ENCODE measurements at regions of chr2 and their contacts with region 1.

Region 1: DNA sequence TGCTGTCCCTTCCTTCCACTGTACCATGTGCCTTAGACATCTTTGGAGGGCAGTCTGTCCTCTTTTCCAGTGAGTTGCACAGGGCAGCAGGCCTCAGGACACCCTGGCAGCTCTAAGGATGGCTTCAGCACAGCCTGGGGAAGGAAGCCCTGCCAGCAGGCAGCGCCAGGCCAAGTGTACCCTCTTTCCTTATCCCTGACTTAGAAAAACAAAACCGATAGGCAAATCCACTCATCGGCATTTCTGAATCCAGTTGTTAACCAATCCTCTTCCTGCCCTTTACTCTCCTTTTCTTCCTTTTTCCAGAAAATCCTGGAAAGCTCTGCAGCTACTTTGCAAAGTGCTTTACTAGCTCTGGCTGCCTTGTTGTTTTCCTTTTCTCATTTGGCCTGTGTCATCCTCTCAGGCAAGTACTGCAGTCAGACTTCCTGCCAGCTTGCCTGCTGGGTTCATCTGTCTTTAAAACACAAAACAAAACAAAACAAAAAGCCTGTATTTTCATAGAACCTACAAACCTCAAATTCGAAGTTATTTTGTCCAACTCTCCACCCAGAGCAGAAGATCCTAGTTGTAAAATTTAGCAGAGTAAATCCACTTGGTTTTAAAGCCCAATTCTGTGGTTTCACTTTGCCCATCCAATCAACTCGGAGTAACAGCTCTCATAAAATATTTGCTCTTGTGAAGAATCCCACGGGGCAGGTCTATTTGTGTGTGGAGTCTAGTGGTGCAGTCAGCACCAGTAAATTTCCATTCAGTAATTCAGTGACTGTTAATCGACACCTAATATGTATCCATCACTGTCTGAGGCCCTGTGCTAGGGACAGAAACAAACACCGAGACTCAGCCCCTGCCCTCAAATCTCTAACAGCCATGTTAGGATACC is 45.2 kb downstream of the PCBP1 start:
- DNase-seq: peak; percentile 59
- ATAC-seq: peak; percentile 34
- H3K4me3 Mint-ChIP-seq: peak overlapping the region; percentile 86
- H3K27ac Mint-ChIP-seq: peak overlapping the region; percentile 100
- H3K4me1 Mint-ChIP-seq: peaks cover 74% of the 10 kb centered on the region
- H3K27me3 Mint-ChIP-seq: no peaks in the 10 kb centered on the region

Region 2: DNA sequence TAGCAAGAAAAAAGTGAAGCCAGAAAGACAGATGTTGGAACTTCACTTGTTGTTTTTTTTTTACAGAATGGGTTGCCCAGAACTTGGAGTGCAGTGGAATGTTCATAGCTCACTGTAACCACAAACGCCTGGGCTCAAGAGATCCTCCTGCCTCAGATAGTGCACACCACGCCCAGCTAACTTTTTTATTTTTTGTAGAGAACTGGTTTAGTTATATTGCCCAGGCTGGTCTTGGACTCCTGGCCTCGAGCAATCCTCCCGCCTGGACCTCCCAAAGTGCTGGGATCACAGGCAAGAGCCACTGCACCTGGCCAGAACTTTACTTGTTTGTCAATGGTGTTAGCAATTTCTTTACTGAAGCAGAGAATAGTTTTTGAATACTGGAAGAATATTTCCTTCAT is 159.2 kb before region 1 on chr2:
- CTCF ChIA-PET with region 1: no interaction called
- POLR2A ChIA-PET with region 1: no interaction called
- intact Hi-C with region 1: no loop called
- DNase-seq: no peak
- ATAC-seq: no peak
- H3K4me3 Mint-ChIP-seq: no peak overlapping the region
- H3K27ac Mint-ChIP-seq: no peak overlapping the region
- H3K4me1 Mint-ChIP-seq: peaks cover 6% of the 10 kb centered on the region
- H3K27me3 Mint-ChIP-seq: no peaks in the 10 kb centered on the region

Region 3: GRCh38 chr2:70070541-70071268 is 61.8 kb before region 1 on chr2:
- CTCF ChIA-PET with region 1: interaction called, 15 read pairs
- POLR2A ChIA-PET with region 1: interaction called, 12 read pairs
- intact Hi-C with region 1: no loop called
- DNase-seq: peak; percentile 73
- ATAC-seq: peak; percentile 60
- H3K4me3 Mint-ChIP-seq: peak overlapping the region; percentile 48
- H3K27ac Mint-ChIP-seq: peak overlapping the region; percentile 94
- H3K4me1 Mint-ChIP-seq: peaks cover 51% of the 10 kb centered on the region
- H3K27me3 Mint-ChIP-seq: no peaks in the 10 kb centered on the region

Region 4: GRCh38 chr2:70104231-70105111 is 28.0 kb before region 1 on chr2:
- CTCF ChIA-PET with region 1: interaction called, 12 read pairs
- POLR2A ChIA-PET with region 1: interaction called, 3 read pairs
- intact Hi-C with region 1: no loop called
- DNase-seq: peak; percentile 76
- ATAC-seq: no peak
- H3K4me3 Mint-ChIP-seq: peak overlapping the region; percentile 73
- H3K27ac Mint-ChIP-seq: peak overlapping the region; percentile 96
- H3K4me1 Mint-ChIP-seq: peaks cover 56% of the 10 kb centered on the region
- H3K27me3 Mint-ChIP-seq: no peaks in the 10 kb centered on the region

Region 5: GRCh38 chr2:70115646-70116442 is 16.6 kb before region 1 on chr2:
- CTCF ChIA-PET with region 1: interaction called, 14 read pairs
- POLR2A ChIA-PET with region 1: interaction called, 70 read pairs
- intact Hi-C with region 1: no loop called
- DNase-seq: no peak
- ATAC-seq: peak; percentile 71
- H3K4me3 Mint-ChIP-seq: no peak overlapping the region
- H3K27ac Mint-ChIP-seq: peak overlapping the region; percentile 31
- H3K4me1 Mint-ChIP-seq: peaks cover 52% of the 10 kb centered on the region
- H3K27me3 Mint-ChIP-seq: no peaks in the 10 kb centered on the region

Region 6: GRCh38 chr2:70173520-70173919 is 41.0 kb after region 1 on chr2:
- CTCF ChIA-PET with region 1: no interaction called
- POLR2A ChIA-PET with region 1: no interaction called
- intact Hi-C with region 1: no loop called
- DNase-seq: no peak
- ATAC-seq: no peak
- H3K4me3 Mint-ChIP-seq: no peak overlapping the region
- H3K27ac Mint-ChIP-seq: no peak overlapping the region
- H3K4me1 Mint-ChIP-seq: no peaks in the 10 kb centered on the region
- H3K27me3 Mint-ChIP-seq: no peaks in the 10 kb centered on the region

Region 7: GRCh38 chr2:70226781-70227180 is 94.3 kb after region 1 on chr2:
- CTCF ChIA-PET with region 1: no interaction called
- POLR2A ChIA-PET with region 1: no interaction called
- intact Hi-C with region 1: no loop called
- DNase-seq: no peak
- ATAC-seq: no peak
- H3K4me3 Mint-ChIP-seq: no peak overlapping the region
- H3K27ac Mint-ChIP-seq: peak overlapping the region; percentile 42
- H3K4me1 Mint-ChIP-seq: peaks cover 12% of the 10 kb centered on the region
- H3K27me3 Mint-ChIP-seq: no peaks in the 10 kb centered on the region